Activated CD4-positive, alpha-beta memory T cell treated with anti-CD3 and anti-CD28 coated beads, Interleukin-2, amount 10 ng/mL, durations not matched to agents 7 days and 5 days (primary cell): ENCODE measurements at regions of chr3 and their contacts with region 1.

Region 1: GRCh38 chr3:112498914-112499711 is at the start of gene BTLA:
- DNase-seq: peak; percentile 39
- H3K4me3 Mint-ChIP-seq: peak within 1 kb of the TSS; percentile 99
- H3K27ac Mint-ChIP-seq: peak within 1 kb of the TSS; percentile 92
- H3K4me1 Mint-ChIP-seq: peaks cover 48% of the 10 kb centered on the region
- H3K27me3 Mint-ChIP-seq: no peaks in the 10 kb centered on the region
- total RNA-seq, gene BTLA: 45.7 to 46.3 TPM

Region 2: DNA sequence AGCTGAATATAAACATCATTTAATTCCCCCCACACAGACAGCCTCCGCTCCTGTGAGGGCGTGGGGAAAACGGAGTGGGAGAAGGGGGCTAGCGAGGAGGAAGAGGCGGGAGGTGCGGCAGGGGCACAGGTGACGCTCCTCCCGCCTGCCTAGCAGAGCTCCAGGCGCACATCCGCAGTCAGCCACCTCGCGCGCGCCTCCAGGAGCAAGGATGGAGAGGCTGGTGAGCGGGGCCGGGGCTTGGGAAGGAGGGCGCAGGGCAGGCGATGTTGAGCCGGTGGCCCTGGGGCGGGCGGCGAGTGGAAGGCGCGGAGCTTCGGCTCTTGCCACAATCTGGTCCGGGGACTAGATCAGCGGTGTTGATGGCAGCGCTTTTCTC is 166.1 kb before region 1 on chr3 and contains the start of gene CD200:
- CTCF ChIA-PET with region 1: interaction called, 17 read pairs
- POLR2A ChIA-PET with region 1: interaction called, 35 read pairs
- DNase-seq: peak; percentile 55
- H3K4me3 Mint-ChIP-seq: peak within 1 kb of the TSS; percentile 84
- H3K27ac Mint-ChIP-seq: peak within 1 kb of the TSS; percentile 67
- H3K4me1 Mint-ChIP-seq: peaks cover 44% of the 10 kb centered on the region
- H3K27me3 Mint-ChIP-seq: no peaks in the 10 kb centered on the region
- total RNA-seq, gene CD200: 9.1 to 9.2 TPM

Region 3: DNA sequence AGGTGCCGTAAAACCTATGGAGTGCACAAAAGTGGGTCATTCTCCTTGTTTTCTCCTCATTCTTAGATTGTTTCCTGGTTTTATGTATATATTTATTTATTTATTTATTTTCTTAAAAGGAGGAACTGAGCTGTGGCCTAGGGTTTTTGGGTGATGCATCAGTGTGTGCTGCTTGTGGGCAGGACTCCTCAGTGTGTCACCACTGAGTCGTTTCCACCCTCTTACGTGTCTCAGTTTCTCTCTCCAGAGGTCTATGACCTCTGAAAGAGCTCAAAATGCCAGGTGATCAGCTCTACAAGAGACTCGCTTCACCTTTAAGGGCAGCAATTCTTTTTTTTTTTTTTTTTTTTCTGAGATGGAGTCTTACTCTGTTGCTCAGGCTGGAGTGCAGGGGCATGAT is 93.3 kb before region 1 on chr3:
- CTCF ChIA-PET with region 1: no interaction called
- POLR2A ChIA-PET with region 1: no interaction called
- DNase-seq: peak; percentile 25
- H3K4me3 Mint-ChIP-seq: no peak overlapping the region
- H3K27ac Mint-ChIP-seq: no peak overlapping the region
- H3K4me1 Mint-ChIP-seq: peaks cover 14% of the 10 kb centered on the region
- H3K27me3 Mint-ChIP-seq: peaks cover 3% of the 10 kb centered on the region

Region 4: DNA sequence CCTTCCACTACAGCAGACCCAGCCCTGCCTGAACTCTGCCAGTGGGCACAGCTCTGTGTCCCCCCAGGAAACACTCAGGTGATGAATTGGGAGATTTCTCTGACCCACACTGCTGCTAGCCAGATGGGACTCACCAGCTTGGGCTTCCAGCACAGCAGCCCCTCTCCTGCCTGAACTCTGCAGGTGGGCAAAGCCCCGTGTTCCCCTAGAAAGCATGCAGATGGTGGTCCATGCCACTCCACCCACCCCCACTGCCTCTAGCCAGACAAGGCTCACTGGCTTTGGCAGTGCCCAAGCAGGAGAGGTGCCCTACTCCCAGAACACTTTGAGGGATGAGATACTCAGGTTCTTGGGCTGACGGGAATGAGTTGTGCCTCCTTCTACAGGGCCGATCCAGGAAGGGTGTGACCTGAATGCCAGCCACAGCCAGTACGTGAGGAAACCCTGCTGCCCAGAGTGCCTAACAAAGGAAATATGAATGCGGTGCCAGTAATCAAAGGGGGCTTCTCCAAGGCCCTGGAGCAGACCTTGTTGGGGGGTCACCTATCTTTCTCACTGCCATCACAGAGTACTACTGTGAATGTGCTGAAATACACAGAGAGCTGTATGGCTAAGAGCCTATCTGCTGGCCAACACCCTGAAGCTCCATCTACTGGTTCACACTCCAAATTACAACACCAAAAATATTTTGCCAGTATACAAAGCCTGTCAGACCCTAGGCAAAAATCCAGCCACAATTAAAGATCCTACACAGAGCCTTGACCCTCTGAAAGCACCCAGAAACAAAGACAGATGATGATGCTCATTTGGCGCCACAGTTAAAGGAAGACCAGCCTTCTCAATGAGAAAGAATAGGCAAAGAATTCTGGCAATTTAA is 61.7 kb before region 1 on chr3:
- CTCF ChIA-PET with region 1: interaction called, 15 read pairs
- POLR2A ChIA-PET with region 1: interaction called, 16 read pairs
- DNase-seq: peak; percentile 37
- H3K4me3 Mint-ChIP-seq: peak overlapping the region; percentile 33
- H3K27ac Mint-ChIP-seq: peak overlapping the region; percentile 78
- H3K4me1 Mint-ChIP-seq: peaks cover 43% of the 10 kb centered on the region
- H3K27me3 Mint-ChIP-seq: no peaks in the 10 kb centered on the region

Region 5: GRCh38 chr3:112464264-112464663 is 34.8 kb before region 1 on chr3:
- CTCF ChIA-PET with region 1: interaction called, 3 read pairs
- POLR2A ChIA-PET with region 1: interaction called, 26 read pairs
- DNase-seq: no peak
- H3K4me3 Mint-ChIP-seq: peak overlapping the region; percentile 22
- H3K27ac Mint-ChIP-seq: peak overlapping the region; percentile 76
- H3K4me1 Mint-ChIP-seq: peaks cover 80% of the 10 kb centered on the region
- H3K27me3 Mint-ChIP-seq: no peaks in the 10 kb centered on the region

Region 6: GRCh38 chr3:112482675-112483074 is 16.4 kb before region 1 on chr3:
- CTCF ChIA-PET with region 1: interaction called, 8 read pairs
- POLR2A ChIA-PET with region 1: interaction called, 13 read pairs
- DNase-seq: no peak
- H3K4me3 Mint-ChIP-seq: peak overlapping the region; percentile 28
- H3K27ac Mint-ChIP-seq: peak overlapping the region; percentile 12
- H3K4me1 Mint-ChIP-seq: peaks cover 45% of the 10 kb centered on the region
- H3K27me3 Mint-ChIP-seq: no peaks in the 10 kb centered on the region

Region 7: DNA sequence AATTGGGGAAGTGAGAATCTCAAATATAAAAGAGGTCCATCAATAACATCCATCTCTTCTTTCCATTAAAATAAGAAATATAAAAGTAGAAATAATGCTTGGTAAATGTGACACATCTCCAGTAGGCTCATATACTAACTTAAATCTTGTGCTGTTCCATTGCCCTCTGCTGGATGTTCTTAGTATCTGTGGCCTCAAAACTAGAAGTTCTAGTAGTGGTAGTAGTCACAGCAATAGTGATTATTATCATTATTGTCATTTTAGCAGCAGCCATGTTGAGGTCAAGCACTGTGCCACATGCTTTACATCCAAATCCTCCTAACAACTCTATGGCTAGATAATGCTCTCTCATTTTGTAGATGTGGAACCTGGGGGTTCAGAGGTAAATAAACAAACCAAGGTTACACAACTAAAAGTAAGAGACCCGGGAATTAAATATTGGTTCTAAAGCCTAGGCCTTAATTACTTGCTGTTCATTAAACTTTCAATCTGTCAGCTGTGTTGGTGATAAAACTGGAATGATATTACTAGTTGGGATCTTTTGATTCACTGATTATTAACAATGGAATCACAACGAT is 20.4 kb after region 1 on chr3:
- CTCF ChIA-PET with region 1: interaction called, 13 read pairs
- POLR2A ChIA-PET with region 1: interaction called, 25 read pairs
- DNase-seq: peak; percentile 33
- H3K4me3 Mint-ChIP-seq: no peak overlapping the region
- H3K27ac Mint-ChIP-seq: no peak overlapping the region
- H3K4me1 Mint-ChIP-seq: peaks cover 31% of the 10 kb centered on the region
- H3K27me3 Mint-ChIP-seq: no peaks in the 10 kb centered on the region

Region 8: GRCh38 chr3:112561731-112562688 is 62.9 kb after region 1 on chr3 and contains the starts of genes ATG3 and SLC35A5:
- CTCF ChIA-PET with region 1: no interaction called
- POLR2A ChIA-PET with region 1: interaction called, 20 read pairs
- DNase-seq: peak; percentile 99
- H3K4me3 Mint-ChIP-seq: peak within 1 kb of the TSS; percentile 84
- H3K27ac Mint-ChIP-seq: peak within 1 kb of the TSS; percentile 96
- H3K4me1 Mint-ChIP-seq: peaks cover 43% of the 10 kb centered on the region
- H3K27me3 Mint-ChIP-seq: no peaks in the 10 kb centered on the region
- total RNA-seq, gene ATG3: 74.8 to 75.3 TPM
- total RNA-seq, gene SLC35A5: 29.7 TPM

Region 9: GRCh38 chr3:112653209-112653871 is 154.2 kb after region 1 on chr3:
- CTCF ChIA-PET with region 1: no interaction called
- POLR2A ChIA-PET with region 1: no interaction called
- DNase-seq: no peak
- H3K4me3 Mint-ChIP-seq: no peak overlapping the region
- H3K27ac Mint-ChIP-seq: no peak overlapping the region
- H3K4me1 Mint-ChIP-seq: peaks cover 24% of the 10 kb centered on the region
- H3K27me3 Mint-ChIP-seq: no peaks in the 10 kb centered on the region